Activated CD4-positive, alpha-beta T cell treated with anti-CD3 and anti-CD28 coated beads for 36 hours (primary cell): ENCODE measurements at regions of chr14 and their contacts with region 1.

Region 1: GRCh38 chr14:69398053-69398817 is at the starts of genes ERH and SLC39A9:
- DNase-seq: peak; percentile 97
- ATAC-seq: peak; percentile 89
- H3K4me3 Mint-ChIP-seq: peak within 1 kb of the TSS; percentile 95
- H3K27ac Mint-ChIP-seq: peak within 1 kb of the TSS; percentile 100
- H3K4me1 Mint-ChIP-seq: peaks cover 63% of the 10 kb centered on the region
- H3K27me3 Mint-ChIP-seq: no peaks in the 10 kb centered on the region
- total RNA-seq, gene ERH: 343 to 385 TPM
- total RNA-seq, gene SLC39A9: 40.1 to 42.6 TPM

Region 2: DNA sequence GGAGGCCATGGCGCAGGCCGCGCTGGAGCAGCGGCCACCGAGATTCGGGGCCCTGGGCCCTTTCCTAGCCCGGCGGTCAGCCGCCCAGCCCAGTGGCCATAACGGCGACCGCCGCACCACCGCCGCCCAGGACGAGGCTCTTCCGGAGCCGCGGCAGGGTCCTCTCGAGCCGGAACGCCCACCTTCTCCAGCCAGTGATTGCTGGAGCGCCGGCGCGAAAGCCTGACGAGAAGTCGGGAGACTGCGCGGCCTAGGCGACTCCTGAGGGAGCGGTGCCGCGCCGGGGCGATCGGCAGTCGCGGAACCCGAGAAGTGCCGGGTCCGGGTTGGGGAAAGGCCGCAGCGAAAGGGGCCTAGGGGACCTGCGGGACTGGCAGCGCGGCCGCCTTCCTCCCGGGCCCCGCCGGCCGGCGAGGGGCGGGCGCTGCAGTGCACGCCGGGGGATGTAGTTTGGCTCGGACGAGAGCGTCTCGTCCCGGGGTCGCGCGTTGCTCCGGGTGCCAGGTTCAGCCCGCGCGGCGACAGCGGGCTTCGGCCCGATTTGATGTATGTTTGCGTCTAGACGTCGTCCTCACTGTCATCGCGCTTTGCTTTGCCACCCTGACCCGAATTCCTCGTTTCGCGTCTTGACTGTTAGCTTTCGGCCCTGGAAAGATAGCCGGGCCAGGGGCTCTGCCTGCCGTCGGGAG is 1723.6 kb before region 1 on chr14 and contains the start of gene VTI1B:
- CTCF ChIA-PET with region 1: no interaction called
- POLR2A ChIA-PET with region 1: no interaction called
- intact Hi-C with region 1: loop called in 1 of 2 experiments (anchors 5 kb)
- DNase-seq: peak; percentile 83
- ATAC-seq: peak; percentile 94
- H3K4me3 Mint-ChIP-seq: peak within 1 kb of the TSS; percentile 81
- H3K27ac Mint-ChIP-seq: peak within 1 kb of the TSS; percentile 82
- H3K4me1 Mint-ChIP-seq: peaks cover 32% of the 10 kb centered on the region
- H3K27me3 Mint-ChIP-seq: no peaks in the 10 kb centered on the region
- total RNA-seq, gene VTI1B: 42.0 to 58.3 TPM

Region 3: GRCh38 chr14:68864306-68864741 is 533.9 kb before region 1 on chr14:
- CTCF ChIA-PET with region 1: no interaction called
- POLR2A ChIA-PET with region 1: no interaction called
- intact Hi-C with region 1: no loop called
- DNase-seq: no peak
- ATAC-seq: no peak
- H3K4me3 Mint-ChIP-seq: no peak overlapping the region
- H3K27ac Mint-ChIP-seq: no peak overlapping the region
- H3K4me1 Mint-ChIP-seq: no peaks in the 10 kb centered on the region
- H3K27me3 Mint-ChIP-seq: no peaks in the 10 kb centered on the region

Region 4: GRCh38 chr14:68979021-68979782 is 419.0 kb before region 1 on chr14 and contains the start of gene ACTN1:
- CTCF ChIA-PET with region 1: no interaction called
- POLR2A ChIA-PET with region 1: no interaction called
- intact Hi-C with region 1: loop called (anchors 1 to 10 kb)
- DNase-seq: peak; percentile 84
- ATAC-seq: peak; percentile 72
- H3K4me3 Mint-ChIP-seq: peak within 1 kb of the TSS; percentile 79
- H3K27ac Mint-ChIP-seq: peak within 1 kb of the TSS; percentile 88
- H3K4me1 Mint-ChIP-seq: peaks cover 38% of the 10 kb centered on the region
- H3K27me3 Mint-ChIP-seq: peaks cover 2% of the 10 kb centered on the region
- total RNA-seq, gene ACTN1: 92.8 to 146 TPM

Region 5: GRCh38 chr14:69191340-69192111 is 206.7 kb before region 1 on chr14 and contains the start of gene EXD2:
- CTCF ChIA-PET with region 1: no interaction called
- POLR2A ChIA-PET with region 1: interaction called, 4 read pairs
- intact Hi-C with region 1: loop called (anchors 1 to 5 kb)
- DNase-seq: peak; percentile 90
- ATAC-seq: peak; percentile 93
- H3K4me3 Mint-ChIP-seq: peak within 1 kb of the TSS; percentile 92
- H3K27ac Mint-ChIP-seq: peak within 1 kb of the TSS; percentile 91
- H3K4me1 Mint-ChIP-seq: peaks cover 25% of the 10 kb centered on the region
- H3K27me3 Mint-ChIP-seq: no peaks in the 10 kb centered on the region
- total RNA-seq, gene EXD2: 10.8 to 14.5 TPM

Region 6: GRCh38 chr14:69335371-69335771 is 62.9 kb before region 1 on chr14:
- CTCF ChIA-PET with region 1: no interaction called
- POLR2A ChIA-PET with region 1: no interaction called
- intact Hi-C with region 1: no loop called
- DNase-seq: no peak
- ATAC-seq: no peak
- H3K4me3 Mint-ChIP-seq: no peak overlapping the region
- H3K27ac Mint-ChIP-seq: no peak overlapping the region
- H3K4me1 Mint-ChIP-seq: no peaks in the 10 kb centered on the region
- H3K27me3 Mint-ChIP-seq: no peaks in the 10 kb centered on the region

Region 7: DNA sequence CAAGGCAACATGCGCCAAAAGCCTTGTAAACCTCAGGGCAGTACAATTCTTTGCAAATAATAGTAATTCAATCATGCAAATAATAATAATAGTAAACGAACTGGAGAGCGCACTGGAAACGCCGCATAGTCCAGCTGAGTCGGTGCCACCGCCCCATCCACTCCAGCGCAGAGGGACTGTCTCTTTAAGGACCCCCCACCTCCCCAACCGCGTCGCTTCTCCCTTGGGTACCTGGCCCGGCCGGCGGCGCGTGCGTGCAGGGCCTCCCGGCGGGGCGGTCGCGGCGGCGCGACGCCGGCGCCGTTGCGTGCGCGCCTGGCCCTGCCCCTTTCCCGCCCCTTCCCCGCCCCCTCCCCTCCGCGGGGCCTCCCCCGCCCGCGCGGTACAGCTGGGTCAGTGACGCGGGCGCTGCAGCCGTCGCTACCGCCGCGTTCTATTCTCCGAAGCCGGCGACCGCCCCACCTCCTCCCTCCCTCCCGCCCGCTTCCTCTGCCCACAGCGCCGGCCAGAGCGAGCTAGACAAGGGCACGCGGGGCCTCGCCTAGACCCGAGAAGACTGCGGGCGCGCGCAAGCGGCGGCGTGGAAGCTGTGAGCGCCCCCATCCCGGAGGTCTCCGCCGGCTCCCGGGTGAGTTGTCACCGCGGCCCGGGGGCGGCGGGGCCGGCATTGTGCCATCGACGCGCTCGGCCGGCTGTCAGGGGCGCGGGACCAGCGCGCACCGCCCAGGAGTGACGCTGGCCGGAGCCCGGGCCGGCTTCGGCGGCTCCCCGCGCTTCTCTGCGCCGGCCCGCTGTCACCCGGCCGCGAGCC is 213.2 kb after region 1 on chr14 and contains the start of gene SUSD6:
- CTCF ChIA-PET with region 1: no interaction called
- POLR2A ChIA-PET with region 1: no interaction called
- intact Hi-C with region 1: loop called in 1 of 2 experiments (anchors 2 kb)
- DNase-seq: peak; percentile 95
- ATAC-seq: peak; percentile 74
- H3K4me3 Mint-ChIP-seq: peak within 1 kb of the TSS; percentile 87
- H3K27ac Mint-ChIP-seq: peak within 1 kb of the TSS; percentile 99
- H3K4me1 Mint-ChIP-seq: peaks cover 48% of the 10 kb centered on the region
- H3K27me3 Mint-ChIP-seq: no peaks in the 10 kb centered on the region
- total RNA-seq, gene SUSD6: 57.9 to 59.3 TPM

Region 8: DNA sequence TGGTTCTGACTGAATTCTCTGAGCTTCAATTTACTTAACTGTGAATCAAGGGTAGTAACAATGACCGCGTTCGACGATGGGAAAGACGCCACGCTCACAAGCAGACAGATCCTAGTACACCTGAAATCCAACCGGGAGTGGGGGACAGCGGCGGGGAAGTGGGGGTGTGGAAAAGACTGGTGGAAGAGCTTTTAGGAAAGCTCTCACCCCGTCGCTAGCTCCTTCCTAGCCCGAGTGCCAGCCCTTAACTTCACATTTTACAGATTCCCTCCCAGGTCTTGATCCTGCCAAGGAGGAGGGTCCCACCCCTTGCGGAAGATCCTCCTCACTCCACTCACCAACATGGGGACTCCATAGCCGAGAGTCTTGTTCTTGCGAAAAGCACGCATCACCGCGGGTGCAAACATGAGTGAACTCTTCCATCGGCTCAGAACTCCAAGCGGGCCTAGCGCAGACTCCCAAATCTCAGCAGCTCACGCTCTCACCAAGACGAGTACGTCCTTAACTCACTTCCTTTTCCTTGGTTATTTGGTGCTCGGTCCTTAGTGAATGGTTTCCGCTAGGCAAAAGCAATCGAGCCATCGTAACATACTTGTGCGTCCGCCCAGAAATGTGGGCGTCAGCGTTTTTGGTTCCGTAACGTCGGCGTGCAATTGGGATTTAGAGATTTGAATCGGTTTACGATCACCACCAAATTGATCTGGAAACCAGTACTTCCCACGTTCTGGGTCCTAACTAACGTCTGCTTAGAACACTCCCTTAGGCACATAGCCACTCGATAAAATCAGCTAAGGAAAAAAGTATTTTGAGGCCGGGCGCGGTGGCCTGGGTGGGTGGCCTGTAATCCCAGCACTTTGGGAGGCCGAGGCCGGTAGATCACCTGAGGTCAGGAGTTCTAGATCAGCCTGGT is 961.2 kb after region 1 on chr14 and contains the start of gene COX16:
- CTCF ChIA-PET with region 1: no interaction called
- POLR2A ChIA-PET with region 1: no interaction called
- intact Hi-C with region 1: loop called in 1 of 2 experiments (anchors 5 kb)
- DNase-seq: peak; percentile 91
- ATAC-seq: peak; percentile 95
- H3K4me3 Mint-ChIP-seq: peak within 1 kb of the TSS; percentile 100
- H3K27ac Mint-ChIP-seq: peak within 1 kb of the TSS; percentile 90
- H3K4me1 Mint-ChIP-seq: peaks cover 37% of the 10 kb centered on the region
- H3K27me3 Mint-ChIP-seq: no peaks in the 10 kb centered on the region
- total RNA-seq, gene COX16: 56.1 to 68.9 TPM